ENCODE measurements at regions of chr13 and their contacts with region 1.

Region 1: DNA sequence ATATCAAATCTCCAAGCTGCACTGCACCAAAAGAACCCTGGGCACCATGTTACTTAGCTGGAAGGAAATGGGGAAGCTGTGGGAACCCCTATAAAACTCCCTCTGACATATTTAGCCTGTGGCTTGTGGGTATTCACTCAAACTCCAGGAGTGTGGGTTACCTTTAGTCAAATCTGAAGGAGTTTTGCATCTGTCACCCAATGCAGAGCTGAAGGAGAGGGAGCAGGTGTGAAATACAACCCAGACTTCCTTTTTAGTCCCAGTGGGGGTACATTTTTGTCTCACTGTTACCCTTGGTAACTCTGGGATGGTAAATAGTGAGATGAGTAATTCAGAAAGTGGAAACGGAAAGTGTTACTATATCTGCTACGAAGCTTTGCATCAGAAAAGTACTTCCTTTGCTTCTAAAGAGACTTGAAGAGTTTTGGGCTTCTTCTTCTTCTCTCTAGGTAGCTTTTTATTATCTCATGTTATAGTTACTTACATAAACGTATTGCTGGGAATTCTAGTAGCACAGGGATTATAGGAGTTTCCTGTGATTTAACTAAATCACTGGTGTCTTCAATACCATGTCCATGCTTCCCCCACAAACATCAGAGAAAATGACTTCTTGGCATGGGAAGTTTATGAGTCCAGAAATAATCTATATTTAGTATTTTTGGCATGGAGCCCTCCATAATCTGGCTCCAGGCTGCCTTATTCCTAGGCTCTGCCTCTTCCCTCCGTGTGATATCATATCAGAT is 105.9 kb downstream of the AKAP11 start:
- DNase-seq: no peak
- ATAC-seq: peak; percentile 74
- H3K4me3 Mint-ChIP-seq: peak overlapping the region; percentile 60
- H3K27ac Mint-ChIP-seq: peak overlapping the region; percentile 91
- H3K4me1 Mint-ChIP-seq: peaks cover 54% of the 10 kb centered on the region
- H3K27me3 Mint-ChIP-seq: no peaks in the 10 kb centered on the region
- CTCF ChIP-seq: no peak

Region 2: GRCh38 chr13:41456768-41457588 is 920.8 kb before region 1 on chr13 and contains the start of gene RGCC:
- CTCF ChIA-PET with region 1: no interaction called
- POLR2A ChIA-PET with region 1: no interaction called
- intact Hi-C with region 1: loop called (anchors 5 kb)
- DNase-seq: peak; percentile 63
- ATAC-seq: peak; percentile 77
- H3K4me3 Mint-ChIP-seq: peak within 1 kb of the TSS; percentile 75
- H3K27ac Mint-ChIP-seq: no peak within 1 kb of the TSS
- H3K4me1 Mint-ChIP-seq: peaks cover 25% of the 10 kb centered on the region
- H3K27me3 Mint-ChIP-seq: peaks cover 35% of the 10 kb centered on the region
- CTCF ChIP-seq: no peak
- total RNA-seq, gene RGCC: 2.4 and 2.7 TPM in 2 replicates

Region 3: DNA sequence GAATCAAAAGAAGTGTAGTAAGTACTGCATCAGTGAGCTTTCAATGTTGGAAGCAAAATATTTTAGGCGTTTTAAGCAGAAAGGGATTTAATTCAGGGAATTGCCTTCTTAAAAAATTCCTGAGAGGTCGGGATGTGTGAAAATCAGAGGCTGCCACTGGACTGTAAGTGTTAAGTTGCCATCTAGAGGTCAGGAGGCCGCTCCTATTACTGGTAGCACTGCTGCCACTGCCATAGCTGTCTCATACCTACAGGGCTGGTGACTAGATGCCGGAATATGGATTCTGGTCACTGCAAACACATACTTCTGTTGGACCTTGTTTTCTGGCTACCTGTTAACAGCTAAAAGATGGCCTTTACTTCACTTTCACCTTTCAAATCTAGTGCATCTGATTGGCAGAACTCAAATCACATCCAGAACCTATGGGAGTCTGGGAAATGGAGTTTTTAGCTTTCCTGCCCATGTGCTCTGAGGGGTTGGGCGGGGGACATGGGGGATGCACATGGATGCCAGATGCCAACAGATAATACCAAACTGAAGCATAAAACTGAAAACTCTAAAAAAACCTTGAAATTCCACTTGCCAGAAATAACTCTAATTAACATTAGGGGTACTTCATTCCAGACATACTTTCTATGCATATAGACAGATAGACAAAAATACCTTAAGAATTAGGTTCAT is 299.5 kb before region 1 on chr13:
- CTCF ChIA-PET with region 1: no interaction called
- POLR2A ChIA-PET with region 1: no interaction called
- intact Hi-C with region 1: no loop called
- DNase-seq: no peak
- ATAC-seq: no peak
- H3K4me3 Mint-ChIP-seq: no peak overlapping the region
- H3K27ac Mint-ChIP-seq: no peak overlapping the region
- H3K4me1 Mint-ChIP-seq: no peaks in the 10 kb centered on the region
- H3K27me3 Mint-ChIP-seq: no peaks in the 10 kb centered on the region
- CTCF ChIP-seq: no peak

Region 4: GRCh38 chr13:42320375-42320787 is 57.4 kb before region 1 on chr13:
- CTCF ChIA-PET with region 1: no interaction called
- POLR2A ChIA-PET with region 1: no interaction called
- intact Hi-C with region 1: no loop called
- DNase-seq: no peak
- ATAC-seq: no peak
- H3K4me3 Mint-ChIP-seq: no peak overlapping the region
- H3K27ac Mint-ChIP-seq: no peak overlapping the region
- H3K4me1 Mint-ChIP-seq: no peaks in the 10 kb centered on the region
- H3K27me3 Mint-ChIP-seq: no peaks in the 10 kb centered on the region
- CTCF ChIP-seq: no peak

Region 5: GRCh38 chr13:42361701-42362100 is 16.1 kb before region 1 on chr13:
- CTCF ChIA-PET with region 1: no interaction called
- POLR2A ChIA-PET with region 1: interaction called, 4 read pairs
- intact Hi-C with region 1: loop called (anchors 2 kb)
- DNase-seq: no peak
- ATAC-seq: no peak
- H3K4me3 Mint-ChIP-seq: no peak overlapping the region
- H3K27ac Mint-ChIP-seq: no peak overlapping the region
- H3K4me1 Mint-ChIP-seq: peaks cover 2% of the 10 kb centered on the region
- H3K27me3 Mint-ChIP-seq: no peaks in the 10 kb centered on the region
- CTCF ChIP-seq: no peak

Region 6: DNA sequence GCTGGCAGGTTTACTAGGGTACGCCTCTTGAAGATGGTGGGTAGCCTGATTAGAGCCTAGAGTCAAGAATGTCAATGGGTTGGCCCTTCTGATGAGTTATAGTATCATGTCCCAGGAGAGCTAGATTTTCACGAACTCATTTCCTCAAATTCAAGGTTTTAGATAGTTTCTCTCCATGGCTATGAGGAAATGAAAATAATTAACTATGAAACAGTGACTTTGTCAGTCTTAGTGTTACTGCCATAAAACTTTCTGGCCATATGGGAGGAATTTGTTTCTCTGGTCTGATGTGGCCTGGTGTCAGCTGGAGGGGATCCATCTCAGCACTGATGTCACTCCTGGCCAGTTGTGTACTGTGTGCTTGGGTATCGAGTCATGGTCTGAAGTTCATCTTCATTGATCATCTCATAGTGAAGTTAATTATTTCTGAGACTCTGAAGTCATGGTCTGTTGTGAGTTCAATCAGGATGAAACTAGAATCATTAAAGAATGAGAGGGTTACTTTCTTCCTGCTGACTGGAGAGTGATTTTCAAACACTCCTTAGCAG is 146.8 kb after region 1 on chr13:
- CTCF ChIA-PET with region 1: no interaction called
- POLR2A ChIA-PET with region 1: interaction called, 6 read pairs
- intact Hi-C with region 1: loop called (anchors 2 kb)
- DNase-seq: no peak
- ATAC-seq: peak; percentile 88
- H3K4me3 Mint-ChIP-seq: no peak overlapping the region
- H3K27ac Mint-ChIP-seq: peak overlapping the region; percentile 35
- H3K4me1 Mint-ChIP-seq: peaks cover 20% of the 10 kb centered on the region
- H3K27me3 Mint-ChIP-seq: no peaks in the 10 kb centered on the region
- CTCF ChIP-seq: no peak

Region 7: GRCh38 chr13:42574435-42575311 is 196.9 kb after region 1 on chr13:
- CTCF ChIA-PET with region 1: no interaction called
- POLR2A ChIA-PET with region 1: no interaction called
- intact Hi-C with region 1: loop called (anchors 2 kb)
- DNase-seq: peak; percentile 23
- ATAC-seq: peak; percentile 69
- H3K4me3 Mint-ChIP-seq: peak overlapping the region; percentile 79
- H3K27ac Mint-ChIP-seq: peak overlapping the region; percentile 52
- H3K4me1 Mint-ChIP-seq: peaks cover 19% of the 10 kb centered on the region
- H3K27me3 Mint-ChIP-seq: peaks cover 8% of the 10 kb centered on the region
- CTCF ChIP-seq: no peak